BJ (cell line): ENCODE measurements at regions of chr6 and their contacts with region 1.

Region 1: DNA sequence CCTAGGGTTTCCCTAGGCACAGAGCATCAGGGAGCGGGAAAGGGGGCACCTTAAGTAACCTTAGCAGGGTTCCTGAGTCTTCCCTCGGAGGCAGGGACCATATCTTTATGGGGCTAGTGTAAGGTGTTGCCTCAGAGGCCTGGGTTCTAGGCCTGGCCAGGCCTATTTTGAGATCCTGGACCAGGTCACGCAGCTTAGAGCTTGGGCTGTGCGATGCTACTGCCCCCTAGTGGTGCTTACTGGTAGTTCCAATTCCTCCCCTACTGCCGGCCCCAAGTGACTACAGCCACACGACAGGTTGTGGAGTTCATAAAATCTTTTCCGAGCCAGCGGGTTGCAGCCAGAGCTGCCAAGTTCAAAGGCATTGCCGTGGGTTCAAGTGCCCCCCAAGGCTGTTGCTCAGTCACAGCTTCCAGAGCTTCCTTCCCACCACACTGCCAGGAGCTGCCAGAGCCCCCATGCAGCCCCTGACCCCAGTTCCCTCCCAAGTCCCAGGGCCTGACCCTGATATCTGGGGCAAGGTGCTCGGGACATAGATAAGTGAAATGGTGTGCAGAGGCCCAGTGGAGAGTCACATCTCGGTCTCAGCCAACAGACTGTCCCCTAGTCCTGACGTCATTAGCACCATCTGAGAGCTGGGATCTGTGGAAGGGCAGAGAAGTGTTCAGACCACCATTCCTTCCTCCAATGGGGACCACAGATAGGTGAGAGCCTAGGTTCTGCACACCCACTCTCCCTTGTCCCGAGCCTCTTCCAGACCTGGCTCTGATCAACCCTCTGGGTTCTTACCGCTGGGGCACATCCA is 3.3 kb downstream of the LRRC73 start:
- DNase-seq: no peak
- H3K4me3 ChIP-seq: no peak overlapping the region
- H3K27me3 ChIP-seq: no peaks in the 10 kb centered on the region
- CTCF ChIP-seq: peak; percentile 95

Region 2: DNA sequence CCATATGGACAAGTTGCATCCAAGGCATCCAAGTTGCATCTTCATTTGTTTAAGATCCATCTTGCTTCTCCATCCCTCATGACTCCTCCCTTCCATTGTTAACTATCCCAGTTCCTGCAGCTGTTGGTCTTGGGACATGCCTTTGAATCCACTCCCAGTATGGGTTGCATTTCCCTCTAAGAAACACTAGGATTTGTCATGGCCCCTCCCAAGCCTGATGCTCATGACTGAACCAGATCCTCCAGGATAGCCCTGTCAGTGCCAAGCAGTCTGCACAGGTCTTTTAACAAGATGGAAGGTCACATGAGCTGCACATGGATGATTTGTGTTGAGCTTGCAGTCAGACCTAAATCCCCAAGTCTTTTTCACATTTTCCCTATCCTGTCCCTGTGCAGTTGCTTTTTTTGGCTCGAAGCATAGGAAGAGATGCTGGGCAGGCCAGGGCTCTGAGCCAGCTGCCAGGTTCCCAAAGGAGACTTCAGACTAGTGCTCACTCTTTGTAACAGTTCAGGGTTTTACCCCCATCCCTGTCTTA is 518.3 kb before region 1 on chr6:
- CTCF ChIA-PET with region 1: no interaction called
- POLR2A ChIA-PET with region 1: no interaction called
- DNase-seq: no peak
- H3K4me3 ChIP-seq: no peak overlapping the region
- H3K27me3 ChIP-seq: no peaks in the 10 kb centered on the region
- CTCF ChIP-seq: no peak

Region 3: GRCh38 chr6:43263314-43264178 is 243.3 kb before region 1 on chr6:
- CTCF ChIA-PET with region 1: interaction called, 41 read pairs
- POLR2A ChIA-PET with region 1: no interaction called
- DNase-seq: no peak
- H3K4me3 ChIP-seq: no peak overlapping the region
- H3K27me3 ChIP-seq: peaks cover 16% of the 10 kb centered on the region
- CTCF ChIP-seq: peak; percentile 88

Region 4: DNA sequence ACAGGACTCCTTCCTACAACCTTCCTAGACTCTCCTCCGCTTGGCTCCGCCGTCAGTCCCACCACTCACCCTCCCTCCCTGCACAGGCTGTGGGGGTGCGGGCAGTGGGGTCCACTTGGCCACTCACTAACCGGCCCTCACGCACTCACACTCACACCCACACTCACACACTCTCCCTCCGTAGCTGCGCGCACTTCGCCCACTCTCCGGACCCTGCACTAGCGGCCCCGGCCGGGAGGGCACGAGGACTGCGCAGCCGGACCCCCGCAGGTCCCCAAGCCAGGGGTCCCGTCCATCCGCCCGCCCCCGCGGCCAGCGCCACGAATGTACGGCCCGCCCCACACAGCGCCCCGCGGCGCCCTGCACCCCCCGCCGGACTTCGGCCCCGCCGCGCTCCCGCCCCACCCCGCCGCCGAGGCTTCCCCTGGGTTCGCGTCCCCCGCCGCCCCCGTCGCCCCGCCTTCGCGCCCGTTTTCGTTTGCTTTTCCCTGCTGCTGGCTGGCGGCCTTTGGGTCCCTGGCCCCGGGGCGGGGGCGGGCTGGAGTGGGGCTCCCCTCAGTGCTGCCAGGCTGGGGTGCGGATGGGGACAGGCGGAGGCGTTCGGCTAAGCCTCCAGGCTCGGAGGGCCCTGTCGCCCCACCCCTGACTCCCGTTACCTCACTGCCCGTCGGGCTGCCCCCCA is 231.8 kb before region 1 on chr6:
- CTCF ChIA-PET with region 1: no interaction called
- POLR2A ChIA-PET with region 1: no interaction called
- DNase-seq: no peak
- H3K4me3 ChIP-seq: peak overlapping the region; percentile 30
- H3K27me3 ChIP-seq: peaks cover 37% of the 10 kb centered on the region
- CTCF ChIP-seq: no peak

Region 5: DNA sequence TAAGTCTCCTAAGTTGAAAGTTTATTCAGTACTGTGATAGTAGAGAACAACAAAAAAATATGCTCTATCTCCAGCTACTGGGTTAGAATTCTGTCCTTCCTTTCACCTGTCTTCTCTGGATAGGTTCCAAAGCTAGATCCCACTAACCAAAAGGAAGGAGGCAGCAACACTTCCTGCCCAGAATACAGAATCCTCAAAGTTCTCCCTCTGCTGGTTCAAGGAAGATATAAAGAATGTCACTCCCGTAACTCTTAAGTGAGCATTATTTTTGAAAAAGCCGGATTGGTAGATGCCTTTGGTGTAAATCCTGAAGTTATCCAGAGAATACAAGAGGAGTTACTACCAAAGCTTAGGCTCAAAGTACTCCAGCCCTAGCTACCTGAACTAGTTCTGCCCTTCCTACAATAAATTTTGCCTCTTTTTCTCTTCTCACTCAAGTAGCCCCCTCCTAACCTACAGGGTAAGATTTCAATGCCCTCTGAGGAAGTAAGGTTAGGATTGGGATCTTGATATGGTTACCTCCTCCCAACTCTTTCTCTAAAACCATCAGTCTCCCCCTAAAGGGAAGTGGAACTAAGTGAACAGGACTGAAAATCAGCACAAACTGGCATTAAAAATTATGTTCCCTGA is 172.3 kb before region 1 on chr6:
- CTCF ChIA-PET with region 1: interaction called, 11 read pairs
- POLR2A ChIA-PET with region 1: no interaction called
- DNase-seq: peak; percentile 12
- H3K4me3 ChIP-seq: no peak overlapping the region
- H3K27me3 ChIP-seq: no peaks in the 10 kb centered on the region
- CTCF ChIP-seq: peak; percentile 68

Region 6: GRCh38 chr6:43432009-43432945 is 74.6 kb before region 1 on chr6:
- CTCF ChIA-PET with region 1: interaction called, 10 read pairs
- POLR2A ChIA-PET with region 1: no interaction called
- DNase-seq: no peak
- H3K4me3 ChIP-seq: no peak overlapping the region
- H3K27me3 ChIP-seq: no peaks in the 10 kb centered on the region
- CTCF ChIP-seq: no peak

Region 7: GRCh38 chr6:43454696-43455530 is 52.0 kb before region 1 on chr6:
- CTCF ChIA-PET with region 1: interaction called, 134 read pairs
- POLR2A ChIA-PET with region 1: no interaction called
- DNase-seq: no peak
- H3K4me3 ChIP-seq: peak overlapping the region; percentile 62
- H3K27me3 ChIP-seq: 0 out of 2 replicates have a peak, but pooled peaks cover 2% of the 10 kb centered on the region
- CTCF ChIP-seq: no peak

Region 8: DNA sequence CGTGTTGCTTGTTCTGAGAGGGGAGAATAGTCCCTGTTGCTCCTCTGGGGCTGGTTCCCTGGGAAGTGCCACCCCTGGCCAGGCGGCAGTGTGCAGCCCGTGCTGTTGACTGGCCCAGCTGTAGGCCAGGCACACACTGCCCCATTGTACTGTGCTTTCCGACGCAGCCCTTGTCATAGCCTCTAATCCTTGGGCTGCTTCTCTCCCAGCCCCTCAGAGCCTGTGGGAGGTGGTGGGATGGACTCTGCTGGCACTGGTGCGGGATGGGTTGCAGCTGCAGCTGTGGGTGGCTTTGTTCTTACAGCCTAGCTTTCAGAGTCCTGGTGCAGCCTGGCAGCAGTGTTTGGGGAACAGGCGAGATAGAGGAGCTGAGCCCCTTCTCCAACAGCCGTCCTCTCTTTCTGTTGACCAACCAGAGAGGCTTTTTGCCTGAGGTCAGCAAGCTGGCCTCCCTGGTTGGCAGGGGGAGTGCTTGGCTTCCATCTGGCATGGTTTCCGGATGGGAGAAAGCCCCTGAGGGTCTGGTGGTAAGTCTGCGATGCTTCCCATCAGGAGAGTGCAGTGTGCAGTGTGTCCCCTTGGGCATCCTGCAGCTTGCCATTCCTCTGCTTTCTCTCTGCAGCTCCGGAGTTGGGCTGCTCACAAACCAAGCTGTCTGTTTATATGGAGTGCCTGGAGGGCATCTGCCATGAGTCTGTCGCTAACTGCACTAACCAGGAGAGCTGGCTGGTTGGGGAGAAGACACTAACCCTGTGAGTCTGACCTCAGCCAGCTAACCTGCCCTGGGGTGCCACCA is 17.4 kb before region 1 on chr6:
- CTCF ChIA-PET with region 1: interaction called, 136 read pairs
- POLR2A ChIA-PET with region 1: no interaction called
- DNase-seq: no peak
- H3K4me3 ChIP-seq: no peak overlapping the region
- H3K27me3 ChIP-seq: no peaks in the 10 kb centered on the region
- CTCF ChIP-seq: no peak

Region 9: DNA sequence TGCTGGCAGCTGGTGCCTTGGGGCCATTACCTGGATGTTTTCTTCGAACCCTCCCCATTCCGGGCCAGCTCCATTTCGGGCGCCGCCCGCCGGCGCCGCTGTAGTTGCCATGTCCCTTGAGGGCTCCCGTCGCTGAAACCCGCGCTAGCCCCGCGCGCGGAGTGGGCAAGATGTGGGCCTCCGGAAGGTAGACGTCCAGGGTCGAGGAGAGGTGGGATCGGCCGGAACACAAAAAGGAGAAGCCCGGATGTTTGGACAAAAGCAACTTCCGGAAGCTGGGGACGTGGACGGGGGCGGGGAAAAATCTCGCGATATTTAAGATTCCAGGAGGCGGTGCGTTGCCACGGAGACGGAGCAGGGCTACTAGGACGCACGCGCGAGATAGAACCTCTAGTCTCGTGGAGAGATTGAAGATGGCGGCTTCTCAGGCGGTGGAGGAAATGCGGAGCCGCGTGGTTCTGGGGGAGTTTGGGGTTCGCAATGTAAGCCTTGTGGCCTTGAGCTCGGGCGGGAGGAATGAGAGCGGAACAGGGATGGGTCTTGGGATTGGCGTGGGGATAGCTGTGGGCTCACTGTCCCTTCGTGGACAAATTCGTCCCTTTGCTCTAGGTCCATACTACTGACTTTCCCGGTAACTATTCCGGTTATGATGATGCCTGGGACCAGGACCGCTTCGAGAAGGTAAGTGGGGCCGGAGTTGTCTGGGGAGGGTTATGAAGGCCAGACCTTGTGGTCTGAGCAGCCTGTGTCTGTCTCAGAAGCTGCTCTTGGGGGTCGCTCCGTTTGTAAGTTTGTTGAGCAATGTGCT is 10.0 kb after region 1 on chr6 and contains the starts of genes POLR1C and YIPF3:
- CTCF ChIA-PET with region 1: interaction called, 11 read pairs
- POLR2A ChIA-PET with region 1: no interaction called
- DNase-seq: peak; percentile 85
- H3K4me3 ChIP-seq: peak within 1 kb of the TSS; percentile 92
- H3K27me3 ChIP-seq: no peaks in the 10 kb centered on the region
- CTCF ChIP-seq: no peak
- polyA plus RNA-seq, gene POLR1C: 37.5 and 41.5 TPM in 2 replicates
- polyA plus RNA-seq, gene YIPF3: 291 and 355 TPM in 2 replicates